ENCODE measurements at regions of chr6 and their contacts with region 1.

Region 1: DNA sequence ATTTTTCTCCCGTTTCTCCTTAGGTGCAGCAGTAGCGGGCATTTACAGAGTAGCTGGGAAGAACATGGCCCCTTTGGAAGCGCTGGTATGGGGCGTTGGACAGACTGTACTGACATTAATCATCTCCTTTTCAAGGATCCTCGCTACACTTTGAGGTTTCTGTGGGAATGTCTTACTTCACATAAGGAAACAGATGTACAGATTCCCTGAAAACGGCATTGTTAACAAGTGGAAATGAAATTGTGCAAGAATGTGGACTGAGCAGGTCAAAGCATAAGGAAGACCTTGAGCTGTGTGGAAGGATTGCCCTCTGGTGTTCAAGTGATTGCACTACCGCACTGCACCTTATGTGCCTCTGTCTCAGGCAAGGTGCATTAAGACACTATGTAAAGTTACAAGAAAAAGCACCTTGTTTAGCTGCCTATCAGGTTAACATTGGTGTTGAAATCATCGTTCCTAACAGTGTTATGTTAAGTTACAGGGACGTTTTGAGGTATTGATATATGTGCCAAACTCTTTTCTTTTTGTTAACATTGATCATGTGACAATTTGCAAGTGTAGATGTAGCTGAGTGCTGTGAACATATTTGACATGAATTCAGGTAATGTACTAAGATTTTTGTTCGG is 38.0 kb downstream of the TMEM170B start:
- DNase-seq: peak; percentile 63 to 80 (median 68)
- ATAC-seq: peak; percentile 100
- H3K4me3 ChIP-seq: no peak overlapping the region
- H3K27ac ChIP-seq: no peak overlapping the region
- H3K4me1 ChIP-seq: no peaks in the 10 kb centered on the region
- H3K27me3 ChIP-seq: peaks cover 2 to 3% of the 10 kb centered on the region in 2 experiments; a peak in 1 of 5 replicates
- CTCF ChIP-seq: peak; percentile 85 to 95 (median 93)
- EP300 ChIP-seq: no peak
- POLR2A ChIP-seq: no peak
- RAD21 ChIP-seq: peak; percentile 94 to 95

Region 2: DNA sequence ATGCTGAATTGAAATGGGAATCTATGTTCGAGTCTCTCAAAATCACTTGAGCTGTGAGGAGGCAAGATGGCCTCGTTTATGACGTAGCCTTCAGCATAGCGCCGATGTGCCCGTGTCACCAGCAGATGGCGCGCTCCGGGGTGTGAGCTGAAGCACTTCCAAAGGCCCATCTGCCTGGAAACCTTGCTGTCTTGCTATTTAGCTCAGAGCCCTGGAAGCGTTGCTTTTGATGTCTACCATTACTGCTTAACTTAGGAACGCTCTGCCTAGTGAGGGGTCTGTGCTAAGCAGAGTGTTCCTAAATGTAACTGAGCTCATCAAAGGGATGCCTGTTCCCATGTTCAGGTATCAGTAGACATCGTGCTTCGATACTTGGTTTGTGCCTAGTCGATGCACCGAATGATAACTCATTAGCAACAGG is 620.9 kb before region 1 on chr6:
- CTCF ChIA-PET with region 1: interaction called, 4 read pairs
- POLR2A ChIA-PET with region 1: no interaction called
- in situ Hi-C with region 1: no loop called
- intact Hi-C with region 1: loop called (anchors 10 kb)
- DNase-seq: peak; percentile 76 to 85 (median 80)
- ATAC-seq: peak; percentile 100
- H3K4me3 ChIP-seq: no peak overlapping the region
- H3K27ac ChIP-seq: no peak overlapping the region
- H3K4me1 ChIP-seq: no peaks in the 10 kb centered on the region; a peak in 1 of 5 replicates
- H3K27me3 ChIP-seq: no peaks in the 10 kb centered on the region
- CTCF ChIP-seq: peak; percentile 90 to 97 (median 95)
- EP300 ChIP-seq: no peak
- POLR2A ChIP-seq: 0 out of 2 replicates have a peak, but pooled peaks have one; percentile 17
- RAD21 ChIP-seq: peak; percentile 66 to 74

Region 3: DNA sequence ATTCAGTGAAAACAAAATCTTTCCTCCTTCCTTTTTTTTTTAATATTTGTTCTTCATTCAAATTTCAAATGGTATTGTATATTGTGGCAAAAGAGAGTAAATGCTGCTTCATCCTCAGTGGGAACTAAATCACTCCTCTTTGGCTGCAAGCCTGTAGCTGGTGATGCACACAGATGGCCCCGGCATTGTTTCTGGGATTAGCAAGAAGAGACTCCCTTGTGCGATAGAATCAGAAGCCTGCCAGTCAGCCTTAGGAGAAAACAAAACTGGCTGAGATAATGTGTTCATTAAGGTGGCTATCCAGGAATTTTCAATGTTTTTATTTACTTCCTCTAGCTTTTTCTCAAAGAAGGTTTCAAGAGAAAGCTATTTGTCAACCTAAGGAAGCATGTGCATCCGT is 510.7 kb before region 1 on chr6:
- CTCF ChIA-PET with region 1: no interaction called
- POLR2A ChIA-PET with region 1: no interaction called
- in situ Hi-C with region 1: no loop called
- intact Hi-C with region 1: loop called (anchors 10 kb)
- DNase-seq: no peak
- ATAC-seq: no peak
- H3K4me3 ChIP-seq: no peak overlapping the region
- H3K27ac ChIP-seq: no peak overlapping the region
- H3K4me1 ChIP-seq: peaks cover 3% of the 10 kb centered on the region in 2 experiments; a peak in 3 of 5 replicates
- H3K27me3 ChIP-seq: peaks cover 0 to 2% of the 10 kb centered on the region in 2 experiments; a peak in 1 of 5 replicates
- CTCF ChIP-seq: no peak
- EP300 ChIP-seq: no peak
- POLR2A ChIP-seq: no peak
- RAD21 ChIP-seq: no peak

Region 4: GRCh38 chr6:11144393-11144851 is 431.1 kb before region 1 on chr6:
- CTCF ChIA-PET with region 1: interaction called, 5 read pairs
- POLR2A ChIA-PET with region 1: interaction called, 3 read pairs
- in situ Hi-C with region 1: no loop called
- intact Hi-C with region 1: loop called (anchors 1 kb)
- DNase-seq: peak; percentile 81 to 88 (median 82)
- ATAC-seq: peak; percentile 97
- H3K4me3 ChIP-seq: no peak overlapping the region
- H3K27ac ChIP-seq: no peak overlapping the region
- H3K4me1 ChIP-seq: peaks cover 0 to 8% of the 10 kb centered on the region in 2 experiments; a peak in 3 of 5 replicates
- H3K27me3 ChIP-seq: peaks cover 0 to 17% of the 10 kb centered on the region in 2 experiments; a peak in 2 of 5 replicates
- CTCF ChIP-seq: peak; percentile 89 to 97 (median 96)
- EP300 ChIP-seq: no peak
- POLR2A ChIP-seq: no peak
- RAD21 ChIP-seq: peak; percentile 91 to 92

Region 5: DNA sequence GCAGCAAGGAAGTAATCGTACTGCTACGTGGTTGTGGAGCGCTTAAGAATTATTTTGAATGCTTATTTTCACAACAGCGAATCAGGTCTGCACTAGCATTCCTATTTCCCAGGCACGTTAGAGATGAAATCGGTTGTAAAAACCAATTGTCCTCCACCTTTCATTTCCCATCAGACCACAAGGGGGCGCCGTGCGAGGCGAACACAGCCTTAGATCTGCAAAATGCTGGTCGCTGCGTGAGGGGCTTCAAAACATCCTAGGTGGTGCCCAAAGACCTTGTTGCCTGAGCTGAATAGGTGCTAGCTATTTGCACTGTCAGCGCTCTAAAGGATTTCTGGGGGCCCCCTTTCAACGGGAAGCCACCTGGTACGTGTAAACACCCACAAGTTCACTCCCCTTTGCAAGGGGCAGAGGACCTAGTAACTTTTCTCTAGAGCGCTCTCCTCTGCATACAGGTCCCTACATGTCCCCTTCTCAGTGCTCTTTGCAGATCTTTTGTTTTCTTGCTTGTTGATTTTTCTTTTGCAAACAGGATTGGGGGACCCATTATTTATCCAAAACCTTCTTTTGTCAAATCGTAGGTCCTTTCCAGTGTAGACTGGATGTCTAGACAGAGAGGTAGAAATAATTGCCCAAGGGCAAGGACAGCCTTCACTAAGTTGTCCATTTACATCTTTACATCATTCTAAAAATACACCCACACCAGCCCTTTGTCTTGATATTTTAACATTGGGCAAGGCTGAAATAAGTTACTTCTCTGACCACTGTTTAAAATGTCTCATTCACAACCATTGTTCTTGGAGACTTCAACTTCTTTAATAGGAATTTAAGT is 402.8 kb before region 1 on chr6:
- CTCF ChIA-PET with region 1: no interaction called
- POLR2A ChIA-PET with region 1: no interaction called
- in situ Hi-C with region 1: no loop called
- intact Hi-C with region 1: loop called (anchors 1 kb)
- DNase-seq: peak; percentile 59 to 76 (median 62)
- ATAC-seq: peak; percentile 92
- H3K4me3 ChIP-seq: no peak overlapping the region
- H3K27ac ChIP-seq: no peak overlapping the region
- H3K4me1 ChIP-seq: peaks cover 0 to 4% of the 10 kb centered on the region in 2 experiments; a peak in 2 of 5 replicates
- H3K27me3 ChIP-seq: peaks cover 11 to 19% of the 10 kb centered on the region in 2 experiments
- CTCF ChIP-seq: peak; percentile 77 to 92 (median 81)
- EP300 ChIP-seq: no peak
- POLR2A ChIP-seq: no peak
- RAD21 ChIP-seq: peak; percentile 70 to 72

Region 6: DNA sequence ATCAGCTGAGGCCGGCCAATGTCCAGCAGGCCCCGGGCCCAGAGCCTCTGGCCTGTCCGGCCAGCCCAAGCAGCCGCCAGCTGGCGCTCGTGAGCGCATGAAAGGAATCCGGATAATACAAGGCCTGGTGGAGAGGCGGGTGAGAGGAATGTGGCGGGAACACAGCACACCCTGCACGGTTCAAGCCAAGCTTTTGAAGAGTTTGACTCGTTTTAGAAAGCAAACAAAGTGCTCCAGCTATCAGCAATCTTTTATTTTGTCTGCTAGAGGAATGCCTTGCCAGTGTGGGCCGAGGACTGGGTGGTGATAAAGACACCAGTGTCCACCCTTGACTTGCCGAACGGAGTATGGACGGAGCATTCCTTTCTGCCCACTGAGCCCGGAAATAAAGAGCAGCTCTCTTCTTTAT is 333.7 kb before region 1 on chr6:
- CTCF ChIA-PET with region 1: no interaction called
- POLR2A ChIA-PET with region 1: no interaction called
- in situ Hi-C with region 1: no loop called
- intact Hi-C with region 1: loop called (anchors 5 kb)
- DNase-seq: peak; percentile 32 to 62 (median 46)
- ATAC-seq: peak; percentile 99
- H3K4me3 ChIP-seq: no peak overlapping the region
- H3K27ac ChIP-seq: no peak overlapping the region
- H3K4me1 ChIP-seq: no peaks in the 10 kb centered on the region
- H3K27me3 ChIP-seq: peaks cover 12 to 36% of the 10 kb centered on the region in 2 experiments; a peak in 4 of 5 replicates
- CTCF ChIP-seq: peak; percentile 83 to 90 (median 88)
- EP300 ChIP-seq: no peak
- POLR2A ChIP-seq: no peak
- RAD21 ChIP-seq: peak; percentile 75 to 86

Measured in K562 (cell line).